Heart left ventricle (tissue), 16 donors: ENCODE measurements at regions of chr7 and their contacts with region 1.

Region 1: GRCh38 chr7:95545078-95545498 is 51.2 kb downstream of the PDK4 start:
- DNase-seq: peak in 4 of 5 donors; percentile 32 to 53 (median 36)
- ATAC-seq: peak; percentile 77 to 89 (median 84)
- H3K4me3 ChIP-seq: peak overlapping the region in 11 of 12 donors; percentile 14 to 57 (median 46)
- H3K27ac ChIP-seq: peak overlapping the region; percentile 63 to 95 (median 80)
- H3K4me1 ChIP-seq: peaks cover 9 to 51% (median 39%) of the 10 kb centered on the region in 12 donors
- H3K27me3 ChIP-seq: no peaks in the 10 kb centered on the region
- CTCF ChIP-seq: peak; percentile 63 to 88 (median 79)
- POLR2A ChIP-seq: no peak

Region 2: GRCh38 chr7:95141755-95142154 is 403.3 kb before region 1 on chr7:
- intact Hi-C with region 1: no loop called
- DNase-seq: no peak
- ATAC-seq: no peak
- H3K4me3 ChIP-seq: no peak overlapping the region
- H3K27ac ChIP-seq: no peak overlapping the region
- H3K4me1 ChIP-seq: no peaks in the 10 kb centered on the region
- H3K27me3 ChIP-seq: no peaks in the 10 kb centered on the region
- CTCF ChIP-seq: no peak
- POLR2A ChIP-seq: no peak

Region 3: GRCh38 chr7:95582578-95583293 is 37.6 kb after region 1 on chr7:
- intact Hi-C with region 1: loop called in 5 of 10 experiments (anchors 1 to 5 kb)
- DNase-seq: peak in 1 of 5 donors; percentile 43
- ATAC-seq: peak; percentile 49 to 70 (median 60)
- H3K4me3 ChIP-seq: no peak overlapping the region
- H3K27ac ChIP-seq: peak overlapping the region in 3 of 12 donors; percentile 12 to 41 (median 38)
- H3K4me1 ChIP-seq: peaks cover 0 to 23% (median 4%) of the 10 kb centered on the region in 12 donors
- H3K27me3 ChIP-seq: no peaks in the 10 kb centered on the region
- CTCF ChIP-seq: no peak
- POLR2A ChIP-seq: no peak

Region 4: GRCh38 chr7:95590387-95591248 is 45.5 kb after region 1 on chr7:
- intact Hi-C with region 1: loop called in 7 of 10 experiments (anchors 1 to 5 kb)
- DNase-seq: no peak
- ATAC-seq: peak in 3 of 4 donors; percentile 0 to 25 (median 17)
- H3K4me3 ChIP-seq: peak overlapping the region in 9 of 12 donors; percentile 8 to 98 (median 86)
- H3K27ac ChIP-seq: peak overlapping the region in 11 of 12 donors; percentile 4 to 99 (median 35)
- H3K4me1 ChIP-seq: peaks cover 0 to 85% (median 54%) of the 10 kb centered on the region in 12 donors
- H3K27me3 ChIP-seq: no peaks in the 10 kb centered on the region
- CTCF ChIP-seq: no peak
- POLR2A ChIP-seq: peak in 1 of 2 donors; percentile 71

Region 5: DNA sequence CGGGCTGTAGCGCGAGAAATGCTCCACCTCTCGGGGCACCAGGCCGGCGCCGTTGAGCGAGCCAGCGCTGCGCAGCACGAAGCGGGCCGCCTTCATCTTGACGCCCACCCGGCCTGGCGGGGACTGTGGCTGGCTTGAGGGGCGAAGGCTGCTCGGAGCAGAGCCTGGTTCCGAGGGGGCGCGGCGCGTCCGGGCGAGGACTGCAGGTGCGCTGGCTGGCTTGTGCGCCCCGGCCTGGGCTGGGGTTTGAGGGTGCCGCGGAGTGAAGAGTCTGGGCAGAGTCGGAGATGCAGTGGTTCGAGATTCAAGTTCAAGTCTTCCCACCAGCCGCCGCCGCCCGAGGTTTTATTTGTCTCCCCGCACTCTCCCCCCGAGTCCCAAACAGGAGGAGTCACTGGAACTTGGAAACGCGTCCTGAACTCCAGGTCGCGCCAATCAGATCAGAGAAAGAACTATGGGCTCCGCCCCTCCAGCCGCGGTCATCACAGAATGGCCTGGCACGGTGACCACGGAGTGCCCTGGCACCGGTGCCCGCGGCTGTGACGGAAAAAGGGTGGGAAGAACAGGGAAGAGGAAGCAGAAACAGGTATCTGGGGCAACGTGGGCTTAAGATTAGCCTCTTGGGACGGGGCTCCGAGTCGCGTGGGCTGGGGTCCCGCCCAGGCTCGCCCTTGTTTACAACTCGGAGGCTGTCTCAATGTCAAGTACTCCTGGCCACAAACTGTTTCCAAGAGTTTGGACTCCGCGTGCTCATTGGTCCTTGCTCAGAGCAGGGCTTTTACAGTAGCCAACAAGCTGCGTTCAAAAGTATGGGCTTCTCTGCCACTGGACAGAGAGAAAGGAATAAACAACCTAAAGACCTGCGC is 51.3 kb after region 1 on chr7 and contains the start of gene PDK4:
- intact Hi-C with region 1: loop called in 9 of 10 experiments (anchors 1 to 5 kb)
- DNase-seq: peak; percentile 92 to 97 (median 95)
- ATAC-seq: peak; percentile 83 to 96 (median 90)
- H3K4me3 ChIP-seq: peak within 1 kb of the TSS; percentile 70 to 98 (median 84)
- H3K27ac ChIP-seq: peak within 1 kb of the TSS; percentile 87 to 99 (median 96)
- H3K4me1 ChIP-seq: peaks cover 5 to 62% (median 40%) of the 10 kb centered on the region in 12 donors
- H3K27me3 ChIP-seq: no peaks in the 10 kb centered on the region
- CTCF ChIP-seq: no peak
- POLR2A ChIP-seq: peak; percentile 72 to 100
- total RNA-seq, gene PDK4: 45.6 to 4,362 (median 173) TPM

Region 6: GRCh38 chr7:95628831-95629439 is 83.8 kb after region 1 on chr7:
- intact Hi-C with region 1: loop called in 1 of 10 experiments (anchors 1 kb)
- DNase-seq: peak in 2 of 5 donors; percentile 21 to 35
- ATAC-seq: peak; percentile 86 to 96 (median 92)
- H3K4me3 ChIP-seq: no peak overlapping the region
- H3K27ac ChIP-seq: peak overlapping the region; percentile 10 to 93 (median 78)
- H3K4me1 ChIP-seq: peaks cover 0 to 19% (median 8%) of the 10 kb centered on the region in 12 donors
- H3K27me3 ChIP-seq: no peaks in the 10 kb centered on the region
- CTCF ChIP-seq: peak in 2 of 12 donors; percentile 5 to 31
- POLR2A ChIP-seq: no peak

Region 7: GRCh38 chr7:95684037-95684436 is 138.9 kb after region 1 on chr7:
- intact Hi-C with region 1: loop called in 9 of 10 experiments (anchors 1 to 5 kb)
- DNase-seq: no peak
- ATAC-seq: peak; percentile 23 to 72 (median 36)
- H3K4me3 ChIP-seq: peak overlapping the region in 1 of 12 donors; percentile 22
- H3K27ac ChIP-seq: peak overlapping the region in 1 of 12 donors; percentile 62
- H3K4me1 ChIP-seq: peaks cover 0 to 12% (median 0%) of the 10 kb centered on the region in 12 donors
- H3K27me3 ChIP-seq: no peaks in the 10 kb centered on the region
- CTCF ChIP-seq: peak; percentile 45 to 77 (median 60)
- POLR2A ChIP-seq: no peak

Region 8: DNA sequence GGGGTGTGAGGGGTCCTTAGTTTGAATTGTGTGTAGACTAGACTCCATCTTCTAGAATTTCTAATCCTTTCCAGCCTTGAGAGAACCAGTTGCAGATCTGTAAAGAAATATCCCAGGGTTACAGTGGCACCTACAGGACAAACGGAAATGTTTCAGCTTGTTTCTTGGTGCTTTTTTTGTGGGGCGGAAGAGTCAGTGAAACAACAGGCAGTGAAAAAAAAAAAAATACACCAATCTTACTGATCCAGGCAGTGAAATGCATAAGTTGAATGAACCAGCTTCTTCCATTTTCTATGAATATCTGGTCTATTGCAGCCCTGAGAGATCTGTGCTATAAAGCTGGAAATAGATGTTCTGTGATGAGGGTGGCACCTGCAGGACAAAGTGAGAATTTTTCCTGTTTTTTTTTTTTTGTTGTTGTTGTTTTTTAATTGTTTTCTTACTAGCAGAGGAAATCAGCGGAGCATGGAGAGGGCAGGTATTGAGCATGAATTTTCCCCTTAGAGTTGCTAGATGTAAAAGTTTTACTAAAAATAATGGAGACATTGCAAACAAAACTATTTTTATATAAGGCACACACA is 145.4 kb after region 1 on chr7:
- intact Hi-C with region 1: loop called in 1 of 10 experiments (anchors 5 kb)
- DNase-seq: peak in 2 of 5 donors; percentile 11 to 18
- ATAC-seq: peak; percentile 26 to 64 (median 56)
- H3K4me3 ChIP-seq: peak overlapping the region in 2 of 12 donors; percentile 11 to 42
- H3K27ac ChIP-seq: no peak overlapping the region
- H3K4me1 ChIP-seq: peaks cover 0 to 7% (median 0%) of the 10 kb centered on the region in 12 donors
- H3K27me3 ChIP-seq: no peaks in the 10 kb centered on the region
- CTCF ChIP-seq: peak; percentile 39 to 76 (median 64)
- POLR2A ChIP-seq: no peak